ENCODE measurements at regions of chr6 and their contacts with region 1.

Region 1: GRCh38 chr6:20877008-20877937 is 343.0 kb downstream of the CDKAL1 start:
- DNase-seq: peak; percentile 62
- ATAC-seq: peak; percentile 98
- H3K4me3 Mint-ChIP-seq: no peak overlapping the region
- H3K27ac Mint-ChIP-seq: peak overlapping the region; percentile 74
- H3K4me1 Mint-ChIP-seq: peaks cover 14% of the 10 kb centered on the region
- H3K27me3 Mint-ChIP-seq: no peaks in the 10 kb centered on the region

Region 2: GRCh38 chr6:20582586-20583446 is 294.5 kb before region 1 on chr6:
- CTCF ChIA-PET with region 1: no interaction called
- POLR2A ChIA-PET with region 1: no interaction called
- intact Hi-C with region 1: loop called in 1 of 2 experiments (anchors 1 kb)
- DNase-seq: no peak
- ATAC-seq: peak; percentile 86
- H3K4me3 Mint-ChIP-seq: no peak overlapping the region
- H3K27ac Mint-ChIP-seq: no peak overlapping the region
- H3K4me1 Mint-ChIP-seq: peaks cover 26% of the 10 kb centered on the region
- H3K27me3 Mint-ChIP-seq: no peaks in the 10 kb centered on the region

Region 3: DNA sequence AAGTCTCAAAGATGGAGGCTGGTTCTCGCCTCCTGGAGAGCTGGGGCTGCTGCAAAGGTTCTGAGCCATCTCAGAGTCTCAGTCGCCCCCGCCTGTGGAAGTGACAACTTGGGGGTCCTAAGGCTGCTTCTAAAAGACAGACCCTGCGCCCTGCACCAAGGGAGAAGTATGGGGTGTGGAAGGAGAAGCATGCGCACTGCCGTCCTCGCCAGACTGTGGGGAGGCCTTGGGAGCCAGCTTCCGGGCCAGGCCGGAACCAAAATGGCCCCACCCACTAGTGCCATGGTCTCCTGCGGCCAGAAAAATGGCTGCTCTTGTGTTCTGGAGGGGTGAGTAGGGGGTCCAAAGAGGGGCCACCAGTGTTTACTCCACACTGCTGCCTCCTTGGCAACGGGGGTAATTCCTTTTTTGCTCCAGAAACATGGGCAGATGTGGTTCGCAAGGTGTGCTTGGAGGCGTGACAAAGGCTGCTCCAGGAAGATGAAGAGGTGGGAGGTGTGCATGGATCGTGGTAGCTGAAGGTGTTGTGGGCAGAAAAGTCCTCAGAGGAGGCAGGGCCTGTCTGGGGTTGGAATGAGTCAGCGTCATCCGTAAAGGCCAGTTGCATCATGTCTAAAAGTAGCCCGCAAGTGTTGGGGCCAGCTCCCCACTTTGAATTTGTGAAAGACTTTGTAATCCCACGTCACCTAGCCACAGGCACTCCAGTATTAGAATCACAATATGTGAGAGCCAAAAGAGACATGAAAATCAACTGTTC is 386.4 kb after region 1 on chr6:
- CTCF ChIA-PET with region 1: no interaction called
- POLR2A ChIA-PET with region 1: no interaction called
- intact Hi-C with region 1: loop called in 1 of 2 experiments (anchors 10 kb)
- DNase-seq: peak; percentile 34
- ATAC-seq: no peak
- H3K4me3 Mint-ChIP-seq: no peak overlapping the region
- H3K27ac Mint-ChIP-seq: no peak overlapping the region
- H3K4me1 Mint-ChIP-seq: peaks cover 22% of the 10 kb centered on the region
- H3K27me3 Mint-ChIP-seq: peaks cover 6% of the 10 kb centered on the region

Measured in activated CD4-positive, alpha-beta T cell treated with anti-CD3 and anti-CD28 coated beads for 36 hours (primary cell).